Thyroid gland (tissue), 4 donors: ENCODE measurements at regions of chr15 and their contacts with region 1.

Region 1: GRCh38 chr15:60592371-60593169 is 113.6 kb upstream of the ICE2 start:
- DNase-seq: peak; percentile 93
- H3K4me3 ChIP-seq: peak overlapping the region; percentile 70 to 81 (median 80)
- H3K27ac ChIP-seq: peak overlapping the region; percentile 93 to 97 (median 95)
- H3K4me1 ChIP-seq: peaks cover 0 to 9% of the 10 kb centered on the region in 2 donors
- H3K27me3 ChIP-seq: no peaks in the 10 kb centered on the region
- CTCF ChIP-seq: peak in 4 of 6 experiments; percentile 11 to 37 (median 17)
- POLR2A ChIP-seq: peak in 1 of 2 donors; percentile 93

Region 2: DNA sequence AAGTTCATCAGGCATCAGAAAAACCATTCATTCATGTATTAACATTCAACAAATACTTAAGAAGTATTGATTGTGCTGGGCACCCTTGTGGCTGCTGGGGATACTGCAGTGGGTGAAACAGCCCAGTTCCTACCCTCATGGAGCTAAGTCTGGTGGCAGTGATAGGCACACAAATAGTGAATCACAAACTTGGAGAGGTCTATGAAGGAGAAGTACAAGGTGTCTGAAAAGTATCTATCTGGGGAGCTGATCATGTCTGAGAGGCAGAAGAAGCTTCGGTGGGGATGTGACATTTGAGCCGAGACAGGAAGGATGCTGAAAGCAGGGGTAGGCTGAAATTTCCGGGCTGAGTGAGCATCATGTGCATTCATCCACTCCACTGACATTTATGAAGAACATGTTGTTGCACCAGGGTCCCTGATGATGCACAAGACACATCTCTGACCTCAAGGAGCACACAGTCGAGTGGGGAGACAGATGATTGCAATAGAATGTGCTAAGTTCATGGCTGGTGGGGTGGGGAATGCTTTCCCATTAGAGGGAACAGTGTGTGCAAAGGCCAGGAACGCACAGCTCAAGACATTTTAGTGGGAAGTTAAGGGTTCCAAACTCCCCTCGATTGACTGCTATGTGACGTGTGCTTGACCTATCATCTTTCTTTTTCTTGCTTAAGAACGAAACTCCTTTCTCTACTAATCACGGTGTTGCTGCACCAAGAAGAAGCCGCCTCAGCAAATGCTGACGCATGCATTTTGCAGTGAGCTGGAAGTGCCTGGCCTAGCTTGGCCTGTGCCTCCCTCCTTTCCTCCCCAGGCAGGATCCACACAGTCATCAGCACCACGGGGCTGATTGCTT is 195.5 kb after region 1 on chr15:
- intact Hi-C with region 1: loop called (anchors 10 kb)
- DNase-seq: no peak
- H3K4me3 ChIP-seq: no peak overlapping the region
- H3K27ac ChIP-seq: no peak overlapping the region
- H3K4me1 ChIP-seq: no peaks in the 10 kb centered on the region
- H3K27me3 ChIP-seq: no peaks in the 10 kb centered on the region
- CTCF ChIP-seq: peak in 3 of 6 experiments; percentile 23 to 35 (median 29)
- POLR2A ChIP-seq: no peak

Region 3: GRCh38 chr15:60859996-60860494 is 267.5 kb after region 1 on chr15:
- intact Hi-C with region 1: no loop called
- DNase-seq: no peak
- H3K4me3 ChIP-seq: no peak overlapping the region
- H3K27ac ChIP-seq: no peak overlapping the region
- H3K4me1 ChIP-seq: no peaks in the 10 kb centered on the region
- H3K27me3 ChIP-seq: no peaks in the 10 kb centered on the region
- CTCF ChIP-seq: no peak
- POLR2A ChIP-seq: no peak

Region 4: GRCh38 chr15:60916679-60917460 is 324.3 kb after region 1 on chr15:
- intact Hi-C with region 1: loop called (anchors 5 kb)
- DNase-seq: peak; percentile 92 to 93
- H3K4me3 ChIP-seq: no peak overlapping the region
- H3K27ac ChIP-seq: peak overlapping the region; percentile 4 to 53 (median 33)
- H3K4me1 ChIP-seq: peaks cover 37 to 49% of the 10 kb centered on the region in 2 donors
- H3K27me3 ChIP-seq: no peaks in the 10 kb centered on the region
- CTCF ChIP-seq: peak; percentile 72 to 92 (median 82)
- POLR2A ChIP-seq: no peak

Region 5: GRCh38 chr15:61834076-61834697 is 1241.6 kb after region 1 on chr15:
- intact Hi-C with region 1: loop called (anchors 10 kb)
- DNase-seq: peak; percentile 87 to 90
- H3K4me3 ChIP-seq: no peak overlapping the region
- H3K27ac ChIP-seq: no peak overlapping the region
- H3K4me1 ChIP-seq: peaks cover 0 to 3% of the 10 kb centered on the region in 2 donors
- H3K27me3 ChIP-seq: no peaks in the 10 kb centered on the region
- CTCF ChIP-seq: peak; percentile 90 to 95 (median 94)
- POLR2A ChIP-seq: no peak